Head of caudate nucleus (tissue), 42 donors: ENCODE measurements at regions of chr12 and their contacts with region 1.

Region 1: DNA sequence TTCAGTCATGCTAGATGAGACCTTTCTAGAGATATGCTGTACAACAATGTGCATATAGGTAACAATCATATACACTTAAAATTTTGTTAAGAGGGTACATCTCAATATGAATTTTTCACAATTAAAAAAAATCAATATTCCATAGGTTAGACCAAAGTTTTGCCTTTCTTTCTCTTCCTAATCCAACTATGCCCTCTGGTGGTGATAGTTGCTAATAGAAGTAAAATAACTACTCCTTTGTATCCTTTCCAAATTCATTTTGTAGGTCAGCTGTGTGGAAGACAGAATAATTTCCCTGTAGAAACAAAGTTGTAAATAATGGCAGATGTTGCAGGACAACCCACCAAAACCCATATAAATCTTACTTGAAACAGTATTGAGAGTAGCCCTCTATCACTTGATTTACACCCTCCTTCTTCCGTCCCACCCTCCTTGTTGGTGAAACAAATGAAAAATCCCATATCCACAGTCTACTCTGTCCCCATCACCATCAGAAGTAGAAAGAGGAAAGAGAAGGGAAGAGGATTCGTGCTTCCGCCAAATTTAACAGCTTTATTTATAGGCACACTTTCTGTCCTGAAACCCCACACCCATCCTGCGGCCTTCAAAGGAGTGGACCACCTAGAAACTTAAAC is 34.2 kb upstream of the KICS2 start:
- DNase-seq: peak in 5 of 42 donors; percentile 25 to 65 (median 41)

Region 2: GRCh38 chr12:64077922-64078321 is 178.4 kb before region 1 on chr12:
- intact Hi-C with region 1: no loop called
- DNase-seq: no peak

Region 3: DNA sequence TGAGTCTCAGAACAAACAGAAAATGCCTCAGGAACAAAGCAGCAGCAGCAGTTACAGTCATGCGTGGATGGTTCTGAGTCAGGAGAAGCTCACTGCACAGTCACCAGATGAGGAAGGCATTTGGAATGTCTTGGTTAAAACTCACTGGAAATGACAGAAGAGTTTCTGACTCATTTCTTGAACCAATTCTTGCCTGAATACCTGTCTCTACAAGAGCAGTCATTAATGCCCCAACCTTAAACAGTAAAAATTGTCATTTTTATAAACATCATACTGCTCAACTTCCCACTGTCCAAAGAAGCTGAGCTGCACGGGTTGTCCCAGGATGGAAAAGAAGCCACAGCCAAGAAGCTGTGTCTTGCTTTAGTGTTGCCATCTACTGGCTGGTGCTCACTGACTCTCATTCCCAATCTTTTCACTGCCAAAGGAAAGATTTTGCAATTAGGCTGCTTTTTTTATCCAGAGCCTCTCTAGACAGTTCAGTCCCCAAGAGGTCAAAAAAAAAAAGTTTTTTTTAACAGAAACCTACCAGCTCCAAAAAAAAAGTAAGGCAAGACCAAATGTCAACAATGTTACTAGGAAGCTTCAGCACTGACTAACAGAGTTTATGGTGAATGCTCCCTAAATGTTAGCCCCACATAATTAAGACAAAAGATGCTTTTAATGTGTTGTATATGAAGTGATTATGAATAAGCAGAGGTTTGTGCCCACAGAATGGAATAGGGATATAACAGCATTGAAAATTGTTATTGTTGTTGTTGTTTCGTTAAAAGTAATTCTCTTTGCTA is 74.6 kb before region 1 on chr12:
- intact Hi-C with region 1: loop called (anchors 10 kb)
- DNase-seq: peak in 40 of 42 donors; percentile 34 to 84 (median 66)